PC-9 (cell line): ENCODE measurements at regions of chr11 and their contacts with region 1.

Region 1: GRCh38 chr11:57735619-57736298 is 5.5 kb upstream of the SELENOH start:
- DNase-seq: peak; percentile 51 to 68
- H3K4me3 ChIP-seq: no peak overlapping the region
- H3K27ac ChIP-seq: peak overlapping the region; percentile 55
- H3K4me1 ChIP-seq: peaks cover 35% of the 10 kb centered on the region
- H3K27me3 ChIP-seq: no peaks in the 10 kb centered on the region
- CTCF ChIP-seq: no peak

Region 2: GRCh38 chr11:57379732-57380131 is 356.0 kb before region 1 on chr11:
- CTCF ChIA-PET with region 1: no interaction called
- POLR2A ChIA-PET with region 1: no interaction called
- intact Hi-C with region 1: no loop called
- DNase-seq: peak; percentile 38 to 47
- H3K4me3 ChIP-seq: no peak overlapping the region
- H3K27ac ChIP-seq: no peak overlapping the region
- H3K4me1 ChIP-seq: no peaks in the 10 kb centered on the region
- H3K27me3 ChIP-seq: peaks cover 74% of the 10 kb centered on the region
- CTCF ChIP-seq: no peak

Region 3: DNA sequence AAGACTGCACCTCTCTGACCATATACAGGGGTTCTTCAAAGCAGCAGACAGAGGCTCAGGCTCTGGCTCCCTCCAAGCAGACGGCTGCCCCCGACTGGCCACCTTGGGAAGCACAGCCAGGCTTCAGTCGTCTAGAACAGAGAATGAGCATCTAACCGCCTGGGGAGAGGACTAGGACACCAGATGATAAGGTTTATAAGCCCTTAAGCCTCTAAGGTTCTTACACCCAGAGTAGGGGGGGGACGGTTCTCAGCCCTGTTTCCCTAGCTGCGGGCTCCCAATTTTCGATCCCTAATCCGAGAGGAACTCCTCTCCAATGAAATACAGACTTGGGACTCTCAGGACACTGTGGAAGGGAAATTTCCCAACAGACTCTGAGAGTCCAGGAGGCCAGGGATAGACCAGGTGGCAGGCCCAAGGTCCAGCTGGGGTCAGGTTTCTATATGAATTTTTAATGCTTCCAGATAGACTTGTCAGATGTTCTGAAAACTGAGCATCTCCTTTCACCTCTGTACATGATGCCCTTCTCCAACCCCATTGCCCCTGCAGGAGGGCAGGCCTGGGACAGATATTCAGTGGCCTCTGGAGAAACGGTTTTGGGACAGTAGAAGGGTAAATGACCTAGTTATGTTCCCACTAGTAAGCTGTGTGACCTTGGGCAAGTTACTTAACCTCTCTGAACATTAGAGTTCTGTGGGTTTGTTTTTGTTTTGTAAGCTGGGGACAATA is 255.2 kb before region 1 on chr11:
- CTCF ChIA-PET with region 1: interaction called, 11 read pairs
- POLR2A ChIA-PET with region 1: no interaction called
- intact Hi-C with region 1: no loop called
- DNase-seq: peak; percentile 62 to 69
- H3K4me3 ChIP-seq: no peak overlapping the region
- H3K27ac ChIP-seq: no peak overlapping the region
- H3K4me1 ChIP-seq: peaks cover 6% of the 10 kb centered on the region; the same call in 1 of the 2 replicates
- H3K27me3 ChIP-seq: peaks cover 28% of the 10 kb centered on the region
- CTCF ChIP-seq: peak; percentile 90

Region 4: DNA sequence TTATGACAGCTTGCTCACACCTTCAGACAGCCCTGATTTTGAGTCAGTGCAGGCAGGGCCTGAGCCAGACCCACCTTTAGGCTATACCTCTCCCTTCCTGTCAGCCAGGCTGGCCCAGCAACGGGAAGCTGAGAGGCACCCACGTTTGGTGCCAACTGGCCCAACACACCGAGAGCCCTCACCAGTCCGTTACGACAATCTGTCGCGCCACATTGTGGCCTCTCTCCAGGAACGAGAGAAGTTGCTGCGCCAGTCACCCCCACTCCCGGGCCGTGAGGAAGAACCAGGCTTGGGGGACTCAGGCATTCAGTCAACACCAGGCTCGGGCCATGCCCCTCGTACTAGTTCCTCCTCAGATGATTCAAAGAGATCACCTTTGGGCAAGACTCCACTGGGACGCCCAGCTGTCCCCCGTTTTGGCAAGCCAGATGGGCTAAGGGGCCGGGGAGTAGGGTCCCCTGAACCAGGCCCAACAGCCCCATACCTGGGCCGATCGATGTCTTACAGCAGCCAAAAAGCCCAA is 36.9 kb before region 1 on chr11:
- CTCF ChIA-PET with region 1: no interaction called
- POLR2A ChIA-PET with region 1: interaction called, 46 read pairs
- intact Hi-C with region 1: no loop called
- DNase-seq: no peak
- H3K4me3 ChIP-seq: no peak overlapping the region
- H3K27ac ChIP-seq: no peak overlapping the region
- H3K4me1 ChIP-seq: no peaks in the 10 kb centered on the region
- H3K27me3 ChIP-seq: no peaks in the 10 kb centered on the region
- CTCF ChIP-seq: no peak

Region 5: GRCh38 chr11:57712256-57713150 is 23.3 kb before region 1 on chr11 and contains the start of gene TMX2:
- CTCF ChIA-PET with region 1: no interaction called
- POLR2A ChIA-PET with region 1: interaction called, 12 read pairs
- intact Hi-C with region 1: loop called (anchors 1 kb)
- DNase-seq: peak; percentile 94 to 100
- H3K4me3 ChIP-seq: peak within 1 kb of the TSS; percentile 97
- H3K27ac ChIP-seq: peak within 1 kb of the TSS; percentile 75
- H3K4me1 ChIP-seq: peaks cover 25% of the 10 kb centered on the region
- H3K27me3 ChIP-seq: no peaks in the 10 kb centered on the region
- CTCF ChIP-seq: no peak
- total RNA-seq, gene TMX2: 124 and 138 TPM in 2 replicates

Region 6: GRCh38 chr11:57792060-57792541 is 56.3 kb after region 1 on chr11:
- CTCF ChIA-PET with region 1: no interaction called
- POLR2A ChIA-PET with region 1: interaction called, 11 read pairs
- intact Hi-C with region 1: no loop called
- DNase-seq: peak in 1 of 2 experiments; percentile 36
- H3K4me3 ChIP-seq: no peak overlapping the region
- H3K27ac ChIP-seq: peak overlapping the region; percentile 49
- H3K4me1 ChIP-seq: peaks cover 54% of the 10 kb centered on the region
- H3K27me3 ChIP-seq: no peaks in the 10 kb centered on the region
- CTCF ChIP-seq: no peak